Mucosa of descending colon (tissue), 3 donors: ENCODE measurements at regions of chr7 and their contacts with region 1.

Region 1: GRCh38 chr7:6435486-6436384 is 12.0 kb downstream of the DAGLB start:
- DNase-seq: peak; percentile 80 to 89 (median 84)
- ATAC-seq: peak; percentile 93
- H3K4me3 ChIP-seq: no peak overlapping the region
- H3K4me1 ChIP-seq: peaks cover 11% of the 10 kb centered on the region
- CTCF ChIP-seq: peak; percentile 94

Region 2: DNA sequence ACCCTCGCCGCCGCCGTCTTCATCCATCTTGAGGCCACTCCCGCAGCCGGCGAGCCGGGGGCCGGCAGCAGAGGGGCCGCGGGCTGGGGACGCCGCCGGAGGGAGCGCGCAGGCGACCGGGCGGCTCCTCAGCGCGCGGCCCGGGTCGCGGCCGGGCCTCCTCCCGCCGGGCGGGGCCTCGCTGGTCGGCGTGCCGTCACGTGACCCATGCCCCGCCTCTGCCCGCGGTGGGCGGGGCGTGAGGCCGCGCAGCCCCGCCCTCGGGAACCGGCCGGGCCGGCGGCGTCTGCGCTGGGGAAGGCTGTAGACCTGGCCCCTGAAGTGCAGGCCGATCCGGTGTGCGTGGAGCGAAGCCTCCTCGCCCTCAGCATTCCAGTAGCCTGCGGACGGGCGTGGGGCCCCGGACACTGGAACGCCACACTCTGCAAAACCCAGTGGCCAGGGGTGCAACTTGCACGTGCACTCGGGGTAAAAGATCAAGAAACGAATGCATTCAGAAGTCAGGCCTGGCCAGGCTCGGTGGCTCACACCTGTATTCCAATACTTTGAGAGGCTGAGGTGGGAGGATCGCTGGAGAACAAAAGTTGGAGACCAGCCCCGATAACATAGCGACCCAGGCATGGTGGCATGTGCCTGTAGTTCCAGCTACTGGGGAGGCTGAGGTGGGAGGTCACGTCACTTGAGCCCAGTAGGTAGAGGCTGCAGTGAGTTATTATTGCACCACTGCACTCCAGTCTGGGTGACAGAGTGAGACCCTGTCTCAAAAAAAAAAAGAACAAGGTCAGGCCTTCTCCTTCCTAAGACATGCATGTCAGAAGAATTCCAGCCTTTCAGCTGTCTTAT is 163.0 kb before region 1 on chr7 and contains the start of gene CYTH3:
- intact Hi-C with region 1: loop called in 1 of 2 experiments (anchors 10 kb)
- DNase-seq: peak; percentile 85 to 93 (median 86)
- ATAC-seq: peak; percentile 97
- H3K4me3 ChIP-seq: peak within 1 kb of the TSS; percentile 75
- H3K4me1 ChIP-seq: peaks cover 23% of the 10 kb centered on the region
- CTCF ChIP-seq: no peak
- total RNA-seq, gene CYTH3: 10.4 to 23.2 (median 11.9) TPM